ENCODE measurements at regions of chr12 and their contacts with region 1.

Region 1: GRCh38 chr12:121917979-121918678 is at the start of gene CFAP251:
- DNase-seq: peak; percentile 73
- H3K4me3 ChIP-seq: peak within 1 kb of the TSS; percentile 7 to 58 (median 37)
- H3K27ac ChIP-seq: peak within 1 kb of the TSS in 3 of 4 donors; percentile 15 to 56 (median 48)
- H3K4me1 ChIP-seq: peaks cover 3 to 13% (median 3%) of the 10 kb centered on the region in 3 donors
- H3K27me3 ChIP-seq: no peaks in the 10 kb centered on the region
- CTCF ChIP-seq: peak; percentile 56 to 95 (median 77)
- POLR2A ChIP-seq: no peak
- total RNA-seq, gene CFAP251: 0.34 to 2.9 (median 2.2) TPM

Region 2: GRCh38 chr12:121729021-121729420 is 189.1 kb before region 1 on chr12:
- intact Hi-C with region 1: no loop called
- DNase-seq: no peak
- H3K4me3 ChIP-seq: no peak overlapping the region
- H3K27ac ChIP-seq: no peak overlapping the region
- H3K4me1 ChIP-seq: no peaks in the 10 kb centered on the region
- H3K27me3 ChIP-seq: no peaks in the 10 kb centered on the region
- CTCF ChIP-seq: no peak
- POLR2A ChIP-seq: no peak

Region 3: GRCh38 chr12:122003651-122004611 is 85.8 kb after region 1 on chr12:
- intact Hi-C with region 1: no loop called
- DNase-seq: no peak
- H3K4me3 ChIP-seq: no peak overlapping the region
- H3K27ac ChIP-seq: peak overlapping the region in 1 of 4 donors; percentile 72
- H3K4me1 ChIP-seq: peaks cover 8 to 31% (median 8%) of the 10 kb centered on the region in 3 donors
- H3K27me3 ChIP-seq: peaks cover 0 to 90% (median 0%) of the 10 kb centered on the region in 4 donors
- CTCF ChIP-seq: no peak
- POLR2A ChIP-seq: no peak

Region 4: GRCh38 chr12:122021822-122022526 is 103.8 kb after region 1 on chr12 and contains the start of gene BCL7A:
- intact Hi-C with region 1: loop called (anchors 10 kb)
- DNase-seq: no peak
- H3K4me3 ChIP-seq: peak within 1 kb of the TSS; percentile 60 to 89 (median 66)
- H3K27ac ChIP-seq: peak within 1 kb of the TSS; percentile 73 to 85 (median 83)
- H3K4me1 ChIP-seq: peaks cover 22 to 30% (median 22%) of the 10 kb centered on the region in 3 donors
- H3K27me3 ChIP-seq: peaks cover 0 to 43% (median 0%) of the 10 kb centered on the region in 4 donors
- CTCF ChIP-seq: no peak
- POLR2A ChIP-seq: peak in 2 of 4 donors; percentile 46 to 58
- total RNA-seq, gene BCL7A: 2.5 to 8.6 (median 5.1) TPM